Heart left ventricle (tissue), 16 donors: ENCODE measurements at regions of chr3 and their contacts with region 1.

Region 1: GRCh38 chr3:132399054-132399929 is 18.0 kb upstream of the DNAJC13 start:
- DNase-seq: no peak
- ATAC-seq: peak in 3 of 4 donors; percentile 42 to 74 (median 62)
- H3K4me3 ChIP-seq: no peak overlapping the region
- H3K27ac ChIP-seq: no peak overlapping the region
- H3K4me1 ChIP-seq: peaks cover 0 to 5% (median 0%) of the 10 kb centered on the region in 12 donors
- H3K27me3 ChIP-seq: no peaks in the 10 kb centered on the region
- CTCF ChIP-seq: peak; percentile 59 to 82 (median 72)
- POLR2A ChIP-seq: no peak

Region 2: DNA sequence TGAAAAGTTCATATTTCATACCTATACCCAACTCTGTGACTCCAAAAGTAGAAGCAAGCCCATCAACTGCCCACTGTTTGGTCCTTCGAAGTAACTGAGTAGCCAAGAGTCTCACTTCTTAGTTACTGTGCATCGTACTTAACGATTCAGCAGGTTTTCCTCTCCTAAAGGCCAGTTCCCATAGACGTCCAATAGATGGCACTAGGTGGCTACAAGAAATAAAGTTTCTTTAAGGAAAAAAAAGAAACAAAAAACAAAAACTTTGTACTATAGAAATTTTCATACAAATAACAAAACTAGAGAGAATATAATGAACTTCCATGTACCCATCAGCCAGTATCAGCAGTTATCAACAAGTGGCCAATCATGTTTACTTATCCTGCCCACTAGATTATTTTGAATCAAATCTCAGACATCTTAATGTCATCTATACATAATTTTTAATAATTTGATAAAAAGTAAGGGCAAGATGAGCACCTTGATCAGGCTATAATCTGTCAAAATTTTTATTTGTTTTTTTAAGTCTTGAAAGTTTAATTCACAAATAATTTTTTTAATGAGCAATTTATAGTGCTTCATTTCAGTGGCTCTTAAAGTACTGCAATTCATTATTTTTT is 145.9 kb before region 1 on chr3:
- intact Hi-C with region 1: loop called in 9 of 10 experiments (anchors 5 to 10 kb)
- DNase-seq: peak in 1 of 5 donors; percentile 6
- ATAC-seq: peak in 2 of 4 donors; percentile 50 to 61
- H3K4me3 ChIP-seq: no peak overlapping the region
- H3K27ac ChIP-seq: no peak overlapping the region
- H3K4me1 ChIP-seq: no peaks in the 10 kb centered on the region
- H3K27me3 ChIP-seq: no peaks in the 10 kb centered on the region
- CTCF ChIP-seq: peak; percentile 53 to 78 (median 68)
- POLR2A ChIP-seq: no peak

Region 3: DNA sequence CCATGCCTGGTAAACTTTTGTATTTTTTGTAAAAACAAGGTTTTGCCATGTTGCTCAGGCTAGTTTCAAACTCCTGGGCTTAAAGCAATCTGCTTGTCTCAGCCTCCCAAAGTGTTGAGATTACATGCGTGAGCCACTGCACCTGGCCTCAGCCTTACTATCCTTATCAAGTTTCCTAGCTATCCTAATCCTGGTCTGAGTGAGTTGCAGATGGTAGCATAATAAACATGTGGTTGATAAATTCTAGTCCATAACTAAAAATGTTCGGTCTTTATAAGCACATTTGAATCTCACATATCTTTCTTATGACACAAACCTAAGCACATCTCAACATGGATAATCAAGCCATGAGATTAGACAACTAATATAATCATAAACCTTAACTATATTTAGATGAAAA is 304.4 kb after region 1 on chr3:
- intact Hi-C with region 1: no loop called
- DNase-seq: no peak
- ATAC-seq: no peak
- H3K4me3 ChIP-seq: no peak overlapping the region
- H3K27ac ChIP-seq: no peak overlapping the region
- H3K4me1 ChIP-seq: no peaks in the 10 kb centered on the region
- H3K27me3 ChIP-seq: no peaks in the 10 kb centered on the region
- CTCF ChIP-seq: no peak
- POLR2A ChIP-seq: no peak